ENCODE measurements at regions of chr9 and their contacts with region 1.

Region 1: GRCh38 chr9:69877854-69878514 is 57.4 kb downstream of the CFAP95 start:
- DNase-seq: no peak
- H3K4me3 Mint-ChIP-seq: no peak overlapping the region
- H3K27ac Mint-ChIP-seq: no peak overlapping the region
- H3K4me1 Mint-ChIP-seq: no peaks in the 10 kb centered on the region
- H3K27me3 Mint-ChIP-seq: peaks cover 7% of the 10 kb centered on the region

Region 2: DNA sequence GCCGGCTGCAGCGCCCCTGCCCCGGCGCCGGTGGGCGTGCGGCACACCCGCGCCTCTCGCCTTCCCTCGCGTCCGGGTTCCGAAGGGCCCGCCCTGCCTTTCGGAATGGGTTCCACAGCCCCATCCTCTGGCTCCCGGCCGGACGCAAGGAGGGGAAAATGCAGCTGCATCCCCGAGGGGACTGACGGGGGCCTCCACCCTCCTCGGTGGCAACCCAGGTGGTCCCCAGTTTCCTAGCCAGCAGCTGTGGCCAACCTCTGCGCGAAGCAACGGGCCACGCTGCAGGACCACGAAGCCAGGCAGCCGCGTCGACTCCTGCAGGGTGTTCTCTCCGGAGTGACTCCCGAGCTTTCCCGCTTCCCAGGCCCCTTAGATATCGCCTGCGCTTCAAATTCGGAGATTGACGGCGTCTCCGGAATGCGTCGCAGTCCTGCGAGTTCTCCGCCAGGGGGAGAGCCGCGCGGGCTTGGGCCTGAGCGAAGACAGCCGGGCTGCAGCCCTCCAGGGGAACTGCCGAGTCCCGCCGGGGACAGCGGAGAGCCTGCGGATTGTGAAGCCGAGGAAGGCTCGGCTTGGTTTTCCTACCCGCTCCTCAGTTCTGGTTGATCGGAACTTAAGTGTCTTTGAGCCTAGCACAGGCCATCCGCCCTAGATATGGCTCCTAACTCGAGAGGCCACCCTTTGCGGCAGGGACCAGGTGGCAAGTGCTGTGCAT is 205.2 kb before region 1 on chr9:
- intact Hi-C with region 1: loop called (anchors 1 kb)
- DNase-seq: peak; percentile 65
- H3K4me3 Mint-ChIP-seq: peak overlapping the region; percentile 83
- H3K27ac Mint-ChIP-seq: peak overlapping the region; percentile 15
- H3K4me1 Mint-ChIP-seq: peaks cover 7% of the 10 kb centered on the region
- H3K27me3 Mint-ChIP-seq: peaks cover 42% of the 10 kb centered on the region

Region 3: DNA sequence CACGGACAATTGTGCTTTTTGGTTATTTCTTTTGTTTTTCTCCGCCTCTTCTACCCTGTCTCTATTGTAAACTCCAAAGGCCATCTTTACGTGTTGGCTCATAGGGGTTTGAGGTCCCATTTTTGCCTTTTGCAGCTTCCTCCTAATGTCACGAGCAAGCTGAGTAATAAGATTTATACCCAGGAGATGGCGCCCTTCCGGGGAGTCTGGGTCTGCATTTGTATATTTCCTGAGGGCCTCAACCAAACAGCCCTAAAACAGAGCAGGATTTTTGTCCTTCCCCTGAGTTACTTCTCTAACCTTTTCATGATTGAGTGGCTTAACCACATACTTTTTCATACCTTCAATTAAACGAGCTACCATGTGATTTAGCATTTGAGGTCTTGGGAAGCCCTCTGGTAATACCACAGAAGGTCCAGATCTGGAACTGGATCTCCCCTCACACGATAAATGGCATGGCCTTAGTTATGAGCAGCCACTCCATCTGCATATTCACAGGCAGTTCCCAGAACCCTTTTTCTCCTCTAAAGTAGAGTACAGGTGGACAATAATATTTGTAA is 68.6 kb before region 1 on chr9:
- intact Hi-C with region 1: loop called (anchors 1 kb)
- DNase-seq: no peak
- H3K4me3 Mint-ChIP-seq: no peak overlapping the region
- H3K27ac Mint-ChIP-seq: no peak overlapping the region
- H3K4me1 Mint-ChIP-seq: peaks cover 13% of the 10 kb centered on the region
- H3K27me3 Mint-ChIP-seq: no peaks in the 10 kb centered on the region

Region 4: DNA sequence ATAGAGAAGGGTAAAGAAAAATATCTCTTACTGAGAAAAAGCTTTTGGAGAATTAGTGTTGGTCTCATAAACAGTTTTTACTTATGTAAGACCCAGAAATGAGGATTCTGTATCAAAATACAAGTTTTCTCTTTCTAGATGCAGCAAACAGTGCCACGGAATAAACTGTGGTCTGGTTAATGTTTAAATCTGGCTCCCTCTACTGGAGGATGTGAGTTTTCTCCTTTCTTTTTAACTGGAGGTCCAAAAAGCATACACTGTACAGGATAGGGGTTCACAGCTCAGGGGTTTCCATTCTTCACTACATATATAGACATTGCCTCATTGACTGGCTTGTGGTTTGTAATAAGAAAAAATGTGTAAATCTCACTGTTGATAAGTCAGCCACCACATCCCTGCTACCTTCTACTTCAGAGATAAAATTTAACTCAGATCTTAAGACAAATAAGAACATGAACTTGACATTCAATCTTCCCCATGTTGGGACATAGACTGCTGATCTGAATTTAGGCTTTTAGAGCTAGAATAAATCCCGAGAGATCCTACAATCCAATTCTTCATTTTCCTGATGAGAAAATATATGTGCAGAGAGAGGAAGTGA is 41.6 kb after region 1 on chr9:
- intact Hi-C with region 1: loop called (anchors 1 kb)
- DNase-seq: no peak
- H3K4me3 Mint-ChIP-seq: no peak overlapping the region
- H3K27ac Mint-ChIP-seq: no peak overlapping the region
- H3K4me1 Mint-ChIP-seq: no peaks in the 10 kb centered on the region
- H3K27me3 Mint-ChIP-seq: peaks cover 6% of the 10 kb centered on the region